Motor neuron (in vitro differentiated cells): ENCODE measurements at regions of chr12 and their contacts with region 1.

Region 1: DNA sequence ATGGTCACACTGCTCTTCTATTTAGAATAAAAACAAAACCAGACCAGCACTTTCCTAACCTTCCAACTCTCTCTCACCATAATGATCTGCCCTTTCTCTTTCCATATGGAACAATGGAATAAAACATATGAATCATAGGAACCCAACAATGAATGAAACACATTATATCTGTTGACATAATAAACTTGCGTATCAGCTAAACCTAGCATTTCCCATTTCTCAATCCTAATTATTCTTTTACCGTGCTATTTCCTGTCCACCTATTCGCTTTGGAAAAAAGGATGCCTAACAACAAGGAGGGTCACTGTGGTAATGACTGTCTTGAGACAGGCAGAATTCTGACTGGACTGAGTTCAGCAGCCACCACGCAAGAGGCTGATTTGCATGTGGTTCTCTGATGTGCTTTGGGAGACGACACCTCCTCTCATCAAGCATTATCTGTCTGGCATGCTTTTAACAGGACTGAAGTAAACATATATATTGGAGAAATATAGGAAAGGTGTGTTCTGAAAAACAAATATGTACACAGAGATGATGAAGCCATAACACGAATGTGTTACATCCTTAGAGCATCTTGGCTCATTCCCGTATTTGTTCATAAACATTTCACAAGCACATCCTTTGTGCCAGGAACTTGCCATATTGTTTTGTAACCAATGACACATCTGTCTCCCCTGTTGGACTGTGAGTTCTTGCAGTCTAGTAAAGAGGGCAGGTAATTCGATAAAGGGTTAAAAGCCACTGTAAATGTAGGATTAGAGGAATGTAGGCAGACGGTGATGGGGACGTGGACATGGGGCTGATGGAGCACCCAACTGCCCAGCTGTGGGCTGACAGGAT is 87.7 kb downstream of the PTPRB start:
- ATAC-seq: no peak
- H3K4me3 ChIP-seq: no peak overlapping the region
- H3K27ac ChIP-seq: no peak overlapping the region
- H3K4me1 ChIP-seq: peaks cover 0 to under 1% of the 10 kb centered on the region in 2 donors

Region 2: DNA sequence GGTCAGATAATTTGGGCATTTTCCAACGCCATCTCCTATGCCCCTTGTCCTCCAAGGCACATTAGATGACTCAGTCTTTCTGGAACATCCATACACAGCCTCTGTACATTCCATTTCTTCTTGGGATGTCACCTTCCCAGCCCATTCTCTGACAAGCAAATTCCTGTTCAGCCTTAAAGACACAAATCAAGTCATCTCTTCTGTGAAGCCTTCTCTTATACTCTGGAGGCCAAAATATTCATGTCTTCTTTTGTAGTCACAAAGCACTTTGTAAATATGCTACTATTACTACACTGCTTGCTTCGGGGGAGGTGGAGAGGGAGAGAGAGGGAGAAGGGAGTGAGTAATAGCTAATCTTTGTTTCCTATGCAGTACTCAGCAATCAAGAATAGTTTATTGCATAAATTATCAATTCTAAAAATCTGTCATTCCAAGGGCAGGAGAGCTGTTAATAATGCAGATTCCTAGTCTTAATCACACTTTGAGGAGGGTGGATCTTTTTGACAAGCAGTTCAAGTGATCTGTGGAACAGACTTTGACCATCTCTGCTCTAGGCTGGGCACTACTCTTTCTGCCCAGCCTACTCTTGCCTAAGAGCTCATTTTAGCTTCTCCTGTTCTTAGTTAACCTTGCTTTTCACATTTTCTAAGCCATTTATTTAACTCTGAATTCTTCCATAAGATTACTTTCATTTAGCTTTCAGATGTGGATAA is 155.6 kb before region 1 on chr12:
- in situ Hi-C with region 1: loop called in 1 of 9 experiments (anchors 25 kb)
- ATAC-seq: peak in 4 of 8 experiments; percentile 16 to 96 (median 64)
- H3K4me3 ChIP-seq: no peak overlapping the region
- H3K27ac ChIP-seq: no peak overlapping the region
- H3K4me1 ChIP-seq: no peaks in the 10 kb centered on the region